ENCODE measurements at regions of chr10 and their contacts with region 1.

Region 1: DNA sequence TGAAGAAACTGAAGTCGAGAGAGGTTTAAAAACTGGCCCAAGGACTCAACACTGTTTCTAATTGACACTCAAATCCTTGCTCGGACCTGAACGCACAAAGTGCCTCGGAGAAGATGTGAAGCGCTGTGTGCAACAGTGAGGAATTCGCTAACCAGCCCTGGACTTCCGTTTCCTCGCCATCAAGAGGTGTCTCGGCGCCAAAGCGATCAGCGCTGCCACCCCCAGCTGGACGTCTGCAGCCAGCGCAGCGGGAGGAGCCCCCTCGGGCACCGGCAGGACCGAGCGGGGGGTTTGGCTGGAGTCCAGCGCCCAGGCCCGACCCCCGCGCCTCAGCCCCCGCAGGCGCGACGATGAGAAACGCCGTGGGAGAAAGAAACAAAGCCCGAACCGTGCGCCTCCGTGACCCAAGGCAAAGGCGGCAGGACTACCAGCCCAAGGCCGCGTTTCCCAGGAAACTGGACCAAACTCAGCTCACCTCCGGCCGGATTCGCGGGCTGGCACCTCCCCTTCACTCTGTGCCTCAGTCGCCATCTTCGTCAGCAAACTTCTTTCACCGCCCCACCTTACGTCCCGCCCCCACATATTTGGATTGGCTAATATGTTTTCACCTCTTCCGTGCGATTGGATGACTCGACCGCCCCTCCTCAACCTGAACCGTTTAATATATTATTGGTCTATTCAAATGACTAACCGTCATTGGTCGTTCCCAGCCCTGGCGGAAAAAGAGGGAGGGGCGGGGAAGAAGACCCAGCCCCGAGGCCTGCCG is at the start of gene ARHGAP19:
- H3K4me3 ChIP-seq: peak within 1 kb of the TSS; percentile 62
- H3K27ac ChIP-seq: peak within 1 kb of the TSS; percentile 86
- H3K4me1 ChIP-seq: no peaks in the 10 kb centered on the region
- CTCF ChIP-seq: peak; percentile 90

Region 2: DNA sequence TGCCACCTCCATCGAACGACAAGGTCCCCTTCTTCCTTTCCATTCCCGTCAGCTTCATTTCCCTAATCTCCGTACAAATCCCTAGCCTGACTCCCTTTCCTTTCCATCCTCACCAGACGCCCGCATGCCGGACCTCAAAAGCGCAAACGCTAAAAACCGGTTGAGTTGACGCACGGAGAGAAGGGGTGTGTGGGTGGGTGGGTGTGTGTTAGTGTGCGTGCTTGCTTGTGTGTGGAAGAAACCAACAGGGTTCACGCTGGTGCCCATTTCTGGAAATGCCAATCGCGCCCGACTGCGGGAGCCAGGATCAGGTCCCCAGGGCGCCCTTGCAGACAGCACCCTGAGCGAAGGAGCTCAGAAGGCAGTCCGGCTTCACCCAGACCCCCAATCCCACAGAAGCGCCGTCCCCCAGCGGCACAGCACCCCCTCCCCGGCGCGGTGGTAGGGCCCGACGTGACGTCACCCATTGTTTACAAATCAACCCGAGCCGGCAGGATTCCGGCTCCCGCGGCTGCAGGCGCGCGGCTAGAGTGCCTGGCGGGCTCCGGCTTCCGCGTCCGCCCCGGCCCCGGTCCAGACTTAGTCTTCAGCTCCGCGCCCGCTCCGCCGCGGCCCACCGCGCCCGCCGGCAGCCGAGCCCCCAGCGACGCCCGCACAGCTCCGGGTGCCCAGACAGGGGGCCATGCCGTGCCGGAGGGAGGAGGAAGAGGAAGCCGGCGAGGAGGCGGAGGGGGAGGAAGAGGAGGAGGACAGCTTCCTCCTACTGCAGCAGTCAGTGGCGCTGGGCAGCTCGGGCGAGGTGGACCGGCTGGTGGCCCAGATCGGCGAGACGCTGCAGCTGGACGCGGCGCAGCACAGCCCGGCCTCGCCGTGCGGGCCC is 26.7 kb after region 1 on chr10 and contains the start of gene FRAT1:
- CTCF ChIA-PET with region 1: interaction called, 4 read pairs
- POLR2A ChIA-PET with region 1: interaction called, 11 read pairs
- H3K4me3 ChIP-seq: peak within 1 kb of the TSS; percentile 57
- H3K27ac ChIP-seq: peak within 1 kb of the TSS; percentile 100
- H3K4me1 ChIP-seq: no peaks in the 10 kb centered on the region; the same call in 1 of the 2 replicates
- CTCF ChIP-seq: no peak

Region 3: DNA sequence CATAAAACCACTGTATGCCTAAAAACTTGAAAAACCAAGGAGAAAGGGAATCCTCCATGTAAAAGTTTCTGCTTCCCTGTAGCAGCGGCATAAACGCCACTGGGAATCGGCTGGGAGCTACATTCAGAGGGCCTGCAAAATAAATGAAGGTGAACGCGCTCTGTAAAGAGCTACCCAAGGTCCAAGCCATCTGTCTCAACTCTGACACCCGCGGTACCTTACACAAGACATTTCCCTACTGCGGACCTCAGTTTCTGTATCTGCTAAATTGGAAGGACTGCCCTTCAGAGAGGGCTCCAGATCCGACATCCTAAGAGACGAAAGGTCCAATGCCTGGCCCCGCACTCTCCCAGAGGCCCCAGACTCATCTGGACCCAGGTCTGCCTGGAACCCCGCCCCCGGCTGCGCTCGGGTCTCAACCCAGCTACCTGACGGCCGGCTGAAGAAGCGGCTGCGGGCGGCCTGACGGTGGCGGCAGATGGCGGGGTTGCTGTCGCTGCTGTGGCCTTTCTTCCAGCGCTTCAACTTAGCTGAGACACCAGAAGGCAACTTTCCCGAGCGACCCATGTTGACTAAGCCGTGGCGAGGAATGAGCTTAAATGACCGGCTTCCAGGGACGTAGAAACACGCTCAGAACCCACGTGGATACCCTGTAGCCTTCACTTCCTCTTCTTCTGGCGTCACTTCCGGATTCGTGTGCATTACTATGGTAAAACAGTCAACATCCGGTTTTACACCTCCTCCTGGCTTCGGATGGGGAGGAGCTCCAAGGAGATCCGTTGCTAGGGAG is 108.6 kb after region 1 on chr10 and contains the start of gene RRP12:
- CTCF ChIA-PET with region 1: no interaction called
- POLR2A ChIA-PET with region 1: interaction called, 10 read pairs
- H3K4me3 ChIP-seq: peak within 1 kb of the TSS; percentile 79
- H3K27ac ChIP-seq: peak within 1 kb of the TSS; percentile 52
- H3K4me1 ChIP-seq: 0 out of 2 replicates have a peak, but pooled peaks cover 4% of the 10 kb centered on the region
- CTCF ChIP-seq: peak; percentile 58; the same call in 1 of the 2 replicates